ENCODE measurements at regions of chr18 and their contacts with region 1.

Region 1: DNA sequence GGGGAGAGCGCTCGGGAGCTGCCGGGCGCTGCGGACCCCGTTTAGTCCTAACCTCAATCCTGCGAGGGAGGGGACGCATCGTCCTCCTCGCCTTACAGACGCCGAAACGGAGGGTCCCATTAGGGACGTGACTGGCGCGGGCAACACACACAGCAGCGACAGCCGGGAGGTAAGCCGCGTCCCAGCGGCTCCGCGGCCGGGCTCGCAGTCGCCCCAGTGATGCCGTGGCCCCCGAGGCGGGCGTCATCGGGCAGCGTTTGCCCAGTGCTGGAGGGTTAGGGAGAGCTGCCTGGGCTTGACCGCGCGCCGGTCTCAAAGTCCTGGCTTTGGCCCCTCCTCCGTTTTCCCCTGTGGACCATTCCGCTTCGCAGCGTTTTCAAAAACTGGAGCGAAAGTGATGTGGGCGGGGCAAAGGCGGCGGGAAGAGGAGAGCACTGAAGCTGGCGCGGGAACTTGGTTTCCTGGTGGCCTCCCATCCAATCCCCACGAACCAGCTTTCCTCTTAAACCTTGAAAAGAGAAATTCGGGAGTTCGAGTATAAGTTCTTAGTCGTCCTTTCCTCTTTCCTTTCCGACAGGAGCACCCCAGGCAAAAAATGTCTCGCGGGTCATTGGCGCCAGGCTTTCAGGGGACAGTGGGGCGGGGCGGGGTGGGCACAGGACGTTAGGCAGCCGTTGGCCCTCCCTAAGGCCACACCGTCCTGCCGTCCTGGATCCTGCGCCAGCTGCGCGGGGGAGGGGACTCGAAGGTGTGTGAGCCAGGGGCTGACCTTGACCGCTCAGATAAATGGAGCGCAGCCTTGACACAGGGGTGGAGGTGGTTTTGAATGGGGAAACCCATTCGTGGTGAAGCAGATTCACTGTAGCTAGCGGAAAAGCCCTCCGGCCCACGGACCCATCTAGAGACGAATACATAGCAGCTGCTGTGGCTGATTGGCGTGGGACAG is 821 bp downstream of the TYMS start:
- DNase-seq: peak; percentile 84
- ATAC-seq: peak; percentile 94
- H3K4me3 ChIP-seq: peak overlapping the region; percentile 90
- H3K27ac ChIP-seq: peak overlapping the region; percentile 98
- H3K4me1 ChIP-seq: 0 out of 2 replicates have a peak, but pooled peaks cover 2% of the 10 kb centered on the region
- H3K27me3 ChIP-seq: no peaks in the 10 kb centered on the region
- CTCF ChIP-seq: no peak
- POLR2A ChIP-seq: no peak
- RAD21 ChIP-seq: no peak

Region 2: GRCh38 chr18:374721-375168 is 283.5 kb before region 1 on chr18:
- CTCF ChIA-PET with region 1: no interaction called
- POLR2A ChIA-PET with region 1: no interaction called
- dilution Hi-C with region 1: no loop called
- in situ Hi-C with region 1: no loop called
- intact Hi-C with region 1: no loop called
- DNase-seq: no peak
- ATAC-seq: no peak
- H3K4me3 ChIP-seq: no peak overlapping the region
- H3K27ac ChIP-seq: no peak overlapping the region
- H3K4me1 ChIP-seq: peaks cover 9% of the 10 kb centered on the region; the same call in 1 of the 2 replicates
- H3K27me3 ChIP-seq: peaks cover 6% of the 10 kb centered on the region
- CTCF ChIP-seq: no peak
- POLR2A ChIP-seq: no peak
- RAD21 ChIP-seq: no peak

Region 3: GRCh38 chr18:644395-645004 is 13.8 kb before region 1 on chr18:
- CTCF ChIA-PET with region 1: no interaction called
- POLR2A ChIA-PET with region 1: no interaction called
- dilution Hi-C with region 1: no loop called
- in situ Hi-C with region 1: no loop called
- intact Hi-C with region 1: no loop called
- DNase-seq: no peak
- ATAC-seq: no peak
- H3K4me3 ChIP-seq: no peak overlapping the region
- H3K27ac ChIP-seq: no peak overlapping the region
- H3K4me1 ChIP-seq: no peaks in the 10 kb centered on the region; the same call in 1 of the 2 replicates
- H3K27me3 ChIP-seq: peaks cover 6% of the 10 kb centered on the region
- CTCF ChIP-seq: no peak
- POLR2A ChIP-seq: no peak
- RAD21 ChIP-seq: no peak

Region 4: GRCh38 chr18:712401-713134 is 54.3 kb after region 1 on chr18 and contains the start of gene ENOSF1:
- CTCF ChIA-PET with region 1: no interaction called
- POLR2A ChIA-PET with region 1: no interaction called
- dilution Hi-C with region 1: no loop called
- in situ Hi-C with region 1: no loop called
- intact Hi-C with region 1: loop called (anchors 5 kb)
- DNase-seq: peak; percentile 58
- ATAC-seq: peak; percentile 98
- H3K4me3 ChIP-seq: peak within 1 kb of the TSS; percentile 54
- H3K27ac ChIP-seq: peak within 1 kb of the TSS; percentile 3
- H3K4me1 ChIP-seq: no peaks in the 10 kb centered on the region
- H3K27me3 ChIP-seq: no peaks in the 10 kb centered on the region
- CTCF ChIP-seq: peak; percentile 51
- POLR2A ChIP-seq: no peak
- RAD21 ChIP-seq: 0 out of 2 replicates have a peak, but pooled peaks have one; percentile 20
- total RNA-seq, gene ENOSF1: 10.0 and 12.2 TPM in 2 replicates